ENCODE measurements at regions of chr9 and their contacts with region 1.

Region 1: DNA sequence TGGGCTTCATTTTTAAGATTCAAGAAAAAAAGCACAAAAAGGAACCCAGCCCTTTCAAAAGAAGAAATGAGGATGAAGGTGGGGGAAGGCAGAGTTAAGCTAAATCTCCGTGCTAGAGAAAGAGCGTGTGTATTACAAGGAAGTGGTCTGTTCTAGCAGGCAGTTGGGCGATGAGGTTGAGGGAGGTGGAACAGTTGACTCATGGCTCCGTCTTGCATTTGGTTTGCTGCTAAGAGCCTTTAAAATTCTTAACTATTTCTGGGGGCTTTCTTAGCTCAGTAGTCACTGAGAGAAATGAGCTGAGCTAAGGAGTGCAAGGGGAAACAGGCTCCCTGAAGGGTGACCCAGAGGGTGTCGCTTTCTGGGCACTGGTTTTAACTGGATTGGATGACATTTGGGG is 117.4 kb downstream of the GCNT1 start:
- DNase-seq: peak; percentile 83
- CTCF ChIP-seq: no peak

Region 2: DNA sequence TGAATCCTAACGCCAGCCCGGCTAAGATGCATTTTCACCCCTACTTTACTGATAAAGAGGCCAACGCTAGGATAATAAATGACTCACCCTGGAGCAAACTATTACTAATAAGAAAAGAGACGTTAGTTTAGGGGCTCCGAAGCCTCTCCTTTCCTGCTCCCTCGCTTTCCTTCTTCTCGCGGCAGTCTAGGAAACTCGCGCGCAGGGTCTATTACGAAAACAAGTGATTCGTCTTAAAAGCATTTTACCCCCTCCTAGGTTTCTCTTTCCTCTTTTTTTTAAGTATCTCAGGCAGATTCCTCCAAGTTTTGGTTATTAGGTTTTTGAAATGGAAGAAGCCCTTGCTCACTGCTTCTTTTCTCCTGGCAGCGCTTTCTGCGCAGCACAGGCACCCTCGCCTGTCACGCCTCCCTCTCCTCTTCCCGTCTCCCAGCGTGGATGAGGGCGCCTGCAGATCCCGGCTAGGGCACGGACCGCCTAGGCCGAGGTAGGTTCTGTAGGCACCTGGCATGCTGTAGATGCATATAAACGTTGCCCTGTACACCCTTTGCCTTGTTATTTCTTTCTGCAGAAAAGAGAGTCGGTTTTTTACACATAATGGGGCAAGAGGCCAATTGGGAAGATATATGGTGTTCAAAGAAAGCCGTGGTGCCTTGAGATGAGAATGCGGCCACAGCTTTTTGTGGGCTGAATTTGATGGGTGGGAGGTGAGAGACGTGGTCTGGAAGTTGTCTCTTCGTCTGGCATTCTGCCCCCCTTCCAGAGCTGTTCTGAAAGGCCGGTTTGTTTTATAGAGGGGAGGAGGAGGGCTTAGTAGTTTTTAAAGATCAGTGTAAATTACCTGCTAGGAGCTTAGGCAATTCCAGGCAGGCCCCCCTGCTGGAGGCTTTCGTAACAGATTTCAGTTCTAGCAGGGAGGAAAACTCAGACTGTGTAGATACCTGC is 116.4 kb before region 1 on chr9:
- in situ Hi-C with region 1: loop called (anchors 10 kb)
- DNase-seq: peak; percentile 36
- CTCF ChIP-seq: no peak

Region 3: GRCh38 chr9:76610011-76610352 is 33.6 kb after region 1 on chr9:
- in situ Hi-C with region 1: loop called (anchors 5 kb)
- DNase-seq: no peak
- CTCF ChIP-seq: no peak

Measured in GM13976 (cell line).